Left ventricle myocardium superior (tissue), 1 donor: ENCODE measurements at regions of chr2 and their contacts with region 1.

Region 1: GRCh38 chr2:59301466-59302402 is 1060.6 kb upstream of the FANCL start:
- DNase-seq: no peak
- ATAC-seq: peak; percentile 84

Region 2: GRCh38 chr2:59594671-59595222 is 293.0 kb after region 1 on chr2:
- intact Hi-C with region 1: no loop called
- DNase-seq: no peak
- ATAC-seq: no peak

Region 3: DNA sequence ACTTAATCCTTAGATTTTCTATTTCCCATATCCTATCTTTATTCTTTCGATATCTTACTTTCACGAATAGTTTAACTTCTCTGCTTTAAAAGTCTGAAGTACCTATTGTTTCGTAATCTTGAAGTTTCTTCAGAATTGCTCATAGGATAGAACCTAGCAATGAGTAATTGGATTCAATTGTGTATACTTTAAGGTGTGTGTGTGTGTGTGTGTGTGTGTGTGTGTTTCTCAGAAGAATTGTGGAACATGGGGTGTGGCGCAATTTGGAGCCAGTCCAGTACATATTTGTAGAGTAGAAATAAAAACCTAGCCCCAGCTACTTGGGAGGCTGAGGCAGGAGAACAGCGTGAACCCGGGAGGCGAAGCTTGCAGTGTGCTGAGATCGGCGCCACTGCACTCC is 354.1 kb after region 1 on chr2:
- intact Hi-C with region 1: no loop called
- DNase-seq: no peak
- ATAC-seq: no peak

Region 4: DNA sequence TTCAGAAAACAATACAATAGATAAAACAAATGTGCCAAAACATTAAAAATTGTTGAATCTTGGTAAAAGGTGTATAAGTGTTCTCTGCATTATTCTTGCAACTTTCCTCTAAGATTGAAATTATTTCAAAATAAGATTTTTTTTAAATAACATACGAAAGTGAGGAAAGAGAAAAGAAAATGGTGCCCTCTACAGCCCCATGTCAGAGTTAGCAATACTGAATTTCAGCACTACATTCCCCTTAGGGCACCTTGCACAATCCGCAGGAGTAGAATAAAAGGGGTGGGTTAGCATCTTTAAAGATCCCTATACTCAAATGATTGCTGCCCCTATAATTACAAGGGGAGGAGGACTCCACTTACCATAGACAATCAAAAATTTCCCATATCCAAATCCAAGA is 818.1 kb after region 1 on chr2:
- intact Hi-C with region 1: loop called (anchors 10 kb)
- DNase-seq: no peak
- ATAC-seq: peak; percentile 31

Region 5: DNA sequence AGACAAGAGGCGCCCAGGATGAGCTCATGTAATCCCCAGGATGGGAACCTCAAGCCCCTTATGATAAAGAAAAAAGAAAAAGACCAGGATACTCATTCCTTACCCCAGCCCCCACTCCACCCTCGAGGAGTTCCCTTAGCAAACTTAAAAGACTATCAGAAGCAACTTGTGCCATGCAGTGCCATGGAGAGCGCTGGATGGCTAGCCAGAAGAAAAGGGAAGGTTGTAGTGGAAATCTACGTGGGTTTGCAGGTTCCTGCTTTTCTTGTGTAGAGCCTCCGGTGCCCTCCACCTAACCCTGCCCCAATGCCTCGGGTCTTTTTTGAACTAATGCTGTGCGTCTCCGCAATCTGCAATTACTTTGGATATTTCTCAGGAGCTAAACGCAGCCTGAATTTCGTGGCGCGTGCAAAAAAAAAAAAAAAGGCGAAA is 1268.0 kb after region 1 on chr2:
- intact Hi-C with region 1: loop called (anchors 10 kb)
- DNase-seq: no peak
- ATAC-seq: no peak